ENCODE measurements at regions of chr20 and their contacts with region 1.

Region 1: GRCh38 chr20:56343861-56344381 is 14.9 kb upstream of the FAM210B start:
- DNase-seq: peak; percentile 71
- ATAC-seq: peak; percentile 90
- H3K4me3 Mint-ChIP-seq: no peak overlapping the region
- H3K27ac Mint-ChIP-seq: no peak overlapping the region
- H3K4me1 Mint-ChIP-seq: peaks cover 9% of the 10 kb centered on the region
- H3K27me3 Mint-ChIP-seq: peaks cover 61% of the 10 kb centered on the region
- CTCF ChIP-seq: peak; percentile 71

Region 2: GRCh38 chr20:56247948-56248782 is 95.8 kb before region 1 on chr20 and contains the start of gene MC3R:
- CTCF ChIA-PET with region 1: interaction called, 22 read pairs
- POLR2A ChIA-PET with region 1: no interaction called
- intact Hi-C with region 1: loop called (anchors 5 kb)
- DNase-seq: peak; percentile 66
- ATAC-seq: peak; percentile 66
- H3K4me3 Mint-ChIP-seq: no peak within 1 kb of the TSS
- H3K27ac Mint-ChIP-seq: no peak within 1 kb of the TSS
- H3K4me1 Mint-ChIP-seq: no peaks in the 10 kb centered on the region
- H3K27me3 Mint-ChIP-seq: peaks cover 29% of the 10 kb centered on the region
- CTCF ChIP-seq: peak; percentile 62
- total RNA-seq, gene MC3R: not detected

Region 3: DNA sequence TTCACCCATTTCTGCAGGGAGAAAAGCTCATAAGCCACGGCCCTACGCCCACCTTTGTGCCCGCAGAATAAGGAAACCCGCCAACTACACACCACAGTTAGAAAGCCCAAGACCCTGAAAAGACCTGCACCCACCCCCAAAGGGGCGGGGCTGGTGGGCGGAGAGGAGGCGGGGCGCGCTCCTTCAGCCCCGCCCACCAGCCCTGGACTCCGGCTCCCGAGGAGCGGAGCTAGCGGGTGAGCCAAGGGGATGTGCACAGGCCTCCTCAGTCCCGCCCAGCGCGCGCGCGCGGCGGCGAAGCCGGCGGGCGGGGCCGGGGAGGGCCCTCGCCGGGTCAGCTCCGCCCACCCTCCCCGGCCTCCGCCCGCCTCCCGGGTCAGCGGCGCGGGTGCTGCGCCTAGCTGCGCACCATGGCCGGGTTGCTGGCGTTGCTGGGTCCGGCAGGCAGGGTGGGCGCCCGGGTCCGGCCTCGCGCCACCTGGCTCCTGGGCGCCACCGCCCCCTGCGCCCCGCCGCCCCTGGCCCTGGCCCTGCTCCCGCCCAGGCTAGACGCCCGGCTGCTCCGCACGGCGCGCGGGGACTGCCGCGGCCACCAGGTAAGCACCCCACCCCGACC is 14.8 kb after region 1 on chr20 and contains the start of gene FAM210B:
- CTCF ChIA-PET with region 1: interaction called, 14 read pairs
- POLR2A ChIA-PET with region 1: no interaction called
- intact Hi-C with region 1: no loop called
- DNase-seq: peak; percentile 81
- ATAC-seq: peak; percentile 100
- H3K4me3 Mint-ChIP-seq: peak within 1 kb of the TSS; percentile 81
- H3K27ac Mint-ChIP-seq: peak within 1 kb of the TSS; percentile 57
- H3K4me1 Mint-ChIP-seq: peaks cover 18% of the 10 kb centered on the region
- H3K27me3 Mint-ChIP-seq: no peaks in the 10 kb centered on the region
- CTCF ChIP-seq: no peak
- total RNA-seq, gene FAM210B: 3.7 to 4.5 TPM